Activated CD4-positive, alpha-beta T cell treated with anti-CD3 and anti-CD28 coated beads for 36 hours (primary cell): ENCODE measurements at regions of chr10 and their contacts with region 1.

Region 1: GRCh38 chr10:3902054-3902808 is 117.2 kb upstream of the KLF6 start:
- DNase-seq: peak; percentile 55
- ATAC-seq: peak; percentile 48
- H3K4me3 Mint-ChIP-seq: no peak overlapping the region
- H3K27ac Mint-ChIP-seq: peak overlapping the region; percentile 78
- H3K4me1 Mint-ChIP-seq: peaks cover 25% of the 10 kb centered on the region
- H3K27me3 Mint-ChIP-seq: no peaks in the 10 kb centered on the region

Region 2: GRCh38 chr10:3942937-3943489 is 40.8 kb after region 1 on chr10:
- CTCF ChIA-PET with region 1: no interaction called
- POLR2A ChIA-PET with region 1: no interaction called
- intact Hi-C with region 1: loop called in 1 of 2 experiments (anchors 5 kb)
- DNase-seq: no peak
- ATAC-seq: no peak
- H3K4me3 Mint-ChIP-seq: peak overlapping the region; percentile 57
- H3K27ac Mint-ChIP-seq: peak overlapping the region; percentile 81
- H3K4me1 Mint-ChIP-seq: peaks cover 43% of the 10 kb centered on the region
- H3K27me3 Mint-ChIP-seq: no peaks in the 10 kb centered on the region

Region 3: DNA sequence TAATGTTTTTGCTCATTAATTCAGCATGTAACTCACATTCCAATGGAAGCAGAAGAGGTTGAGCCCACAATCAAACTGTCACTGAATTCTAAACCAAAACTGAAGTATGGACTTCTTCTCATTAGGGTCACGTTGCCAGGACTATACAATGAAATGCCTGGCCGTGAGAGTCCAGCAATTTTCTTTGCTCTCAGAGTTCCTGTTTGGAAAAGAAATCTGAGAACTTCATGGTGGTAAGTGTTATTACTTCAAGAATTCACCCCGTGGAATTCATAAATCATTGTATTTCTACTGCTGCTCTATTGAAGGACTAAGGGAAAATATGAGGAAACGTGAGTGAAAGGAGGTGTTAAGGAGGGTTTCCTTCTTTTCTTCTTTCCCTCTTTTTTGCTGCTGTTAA is 482.0 kb after region 1 on chr10:
- CTCF ChIA-PET with region 1: no interaction called
- POLR2A ChIA-PET with region 1: no interaction called
- intact Hi-C with region 1: no loop called
- DNase-seq: no peak
- ATAC-seq: no peak
- H3K4me3 Mint-ChIP-seq: no peak overlapping the region
- H3K27ac Mint-ChIP-seq: no peak overlapping the region
- H3K4me1 Mint-ChIP-seq: no peaks in the 10 kb centered on the region
- H3K27me3 Mint-ChIP-seq: peaks cover 3% of the 10 kb centered on the region

Region 4: DNA sequence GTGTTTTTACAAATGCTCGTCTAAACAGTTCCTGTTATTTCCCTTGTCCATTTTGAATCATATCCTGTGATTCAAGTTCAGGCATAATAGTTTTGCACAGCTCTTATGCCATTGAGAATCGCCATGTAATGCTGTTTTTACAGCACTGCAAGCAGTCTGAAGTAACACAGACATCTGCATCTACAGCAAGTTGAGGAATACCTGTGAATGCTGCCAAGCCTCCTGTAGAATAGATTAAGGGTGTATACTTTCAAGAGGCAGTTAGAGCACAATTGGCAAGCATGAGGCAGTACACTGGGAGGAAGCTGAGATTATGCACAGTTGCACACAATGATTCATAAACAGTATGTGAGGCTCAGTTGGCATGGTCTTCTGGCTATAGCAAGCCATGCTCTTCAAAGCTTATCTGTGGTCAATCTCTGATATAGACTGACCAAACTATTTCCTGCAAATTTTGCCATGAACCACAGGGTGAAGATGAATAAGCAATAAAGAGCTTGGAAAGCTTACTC is 801.9 kb after region 1 on chr10:
- CTCF ChIA-PET with region 1: no interaction called
- POLR2A ChIA-PET with region 1: no interaction called
- intact Hi-C with region 1: no loop called
- DNase-seq: no peak
- ATAC-seq: no peak
- H3K4me3 Mint-ChIP-seq: no peak overlapping the region
- H3K27ac Mint-ChIP-seq: no peak overlapping the region
- H3K4me1 Mint-ChIP-seq: peaks cover 2% of the 10 kb centered on the region
- H3K27me3 Mint-ChIP-seq: peaks cover 21% of the 10 kb centered on the region